Heart left ventricle (tissue), 16 donors: ENCODE measurements at regions of chr3 and their contacts with region 1.

Region 1: GRCh38 chr3:82133070-82133606 is 371.7 kb upstream of the GBE1 start:
- DNase-seq: peak; percentile 46 to 60 (median 57)
- ATAC-seq: peak in 3 of 4 donors; percentile 81 to 82 (median 82)
- H3K4me3 ChIP-seq: no peak overlapping the region
- H3K27ac ChIP-seq: no peak overlapping the region
- H3K4me1 ChIP-seq: no peaks in the 10 kb centered on the region
- H3K27me3 ChIP-seq: no peaks in the 10 kb centered on the region
- CTCF ChIP-seq: peak; percentile 77 to 92 (median 84)
- POLR2A ChIP-seq: no peak

Region 2: DNA sequence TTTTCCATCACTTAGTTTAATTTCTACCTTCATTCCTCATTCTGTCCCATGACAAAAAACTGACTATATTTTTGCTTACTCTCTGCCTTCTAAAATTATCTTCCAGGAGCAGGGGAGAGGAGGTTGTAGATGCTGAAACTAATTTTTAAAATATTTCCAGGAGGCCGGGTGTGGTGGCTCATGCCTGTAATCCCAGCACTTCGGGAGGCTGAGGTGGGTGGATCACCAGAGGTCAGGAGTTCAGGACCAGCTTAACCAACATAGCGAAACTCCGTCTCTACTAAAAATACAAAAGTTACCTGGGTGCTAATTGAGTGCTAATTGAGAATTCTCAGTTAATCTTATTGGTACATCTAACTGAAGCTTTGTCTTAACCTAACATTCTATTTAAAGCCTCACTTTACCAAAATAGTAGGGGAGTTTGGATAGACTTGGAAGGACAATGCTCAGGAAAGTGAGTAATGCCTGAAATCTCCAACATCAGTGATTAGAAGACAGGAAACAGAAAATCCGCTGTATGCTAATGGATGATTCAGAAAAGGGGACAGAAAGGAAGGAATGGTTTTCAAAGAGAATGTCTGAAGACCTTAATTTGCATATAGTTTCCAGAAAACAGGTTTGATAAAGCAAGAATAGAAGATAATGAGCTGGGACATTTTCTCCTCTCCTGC is 707.8 kb before region 1 on chr3:
- intact Hi-C with region 1: loop called in 3 of 10 experiments (anchors 10 kb)
- DNase-seq: no peak
- ATAC-seq: no peak
- H3K4me3 ChIP-seq: no peak overlapping the region
- H3K27ac ChIP-seq: no peak overlapping the region
- H3K4me1 ChIP-seq: no peaks in the 10 kb centered on the region
- H3K27me3 ChIP-seq: no peaks in the 10 kb centered on the region
- CTCF ChIP-seq: no peak
- POLR2A ChIP-seq: no peak

Region 3: DNA sequence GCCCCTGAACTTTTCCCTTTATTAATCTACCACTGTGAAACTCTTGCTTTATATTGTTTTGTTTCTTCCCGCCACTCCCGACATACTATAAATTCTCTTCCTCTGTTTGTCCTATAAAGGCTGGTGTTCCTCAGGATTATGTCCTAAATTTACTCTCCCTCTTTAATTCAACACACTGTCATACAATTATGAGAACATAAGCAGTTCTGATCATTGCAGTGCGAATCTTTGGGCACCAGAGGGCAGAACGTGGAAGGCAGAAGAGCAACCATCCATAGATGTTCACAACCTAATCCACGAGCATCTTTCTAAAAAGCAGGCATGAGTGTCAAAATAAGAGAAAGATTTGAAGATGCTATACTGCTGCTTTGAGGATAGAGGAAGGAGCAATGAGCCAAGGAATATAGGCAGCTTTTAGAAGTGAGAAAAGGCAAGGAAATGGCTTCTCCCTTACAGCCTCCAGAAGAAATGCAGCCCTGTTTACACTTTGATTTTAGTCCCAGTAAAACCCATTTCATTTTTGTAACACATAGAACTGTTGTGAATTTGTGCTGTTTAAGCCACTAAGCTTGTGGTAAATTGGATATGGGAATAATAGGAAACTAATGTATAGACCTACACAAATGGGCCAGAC is 551.1 kb before region 1 on chr3:
- intact Hi-C with region 1: loop called in 4 of 10 experiments (anchors 5 to 10 kb)
- DNase-seq: peak in 1 of 5 donors; percentile 19
- ATAC-seq: peak in 3 of 4 donors; percentile 47 to 72 (median 52)
- H3K4me3 ChIP-seq: no peak overlapping the region
- H3K27ac ChIP-seq: no peak overlapping the region
- H3K4me1 ChIP-seq: peaks cover 0 to 11% (median 0%) of the 10 kb centered on the region in 12 donors
- H3K27me3 ChIP-seq: no peaks in the 10 kb centered on the region
- CTCF ChIP-seq: peak; percentile 32 to 69 (median 52)
- POLR2A ChIP-seq: no peak

Region 4: GRCh38 chr3:81760924-81761903 is 371.9 kb before region 1 on chr3 and contains the start of gene GBE1:
- intact Hi-C with region 1: loop called in 2 of 10 experiments (anchors 5 to 10 kb)
- DNase-seq: peak; percentile 93 to 96 (median 95)
- ATAC-seq: peak; percentile 90 to 95 (median 92)
- H3K4me3 ChIP-seq: peak within 1 kb of the TSS; percentile 48 to 79 (median 68)
- H3K27ac ChIP-seq: peak within 1 kb of the TSS; percentile 91 to 100 (median 98)
- H3K4me1 ChIP-seq: peaks cover 0 to 66% (median 41%) of the 10 kb centered on the region in 12 donors
- H3K27me3 ChIP-seq: no peaks in the 10 kb centered on the region
- CTCF ChIP-seq: peak in 10 of 12 donors; percentile 22 to 64 (median 36)
- POLR2A ChIP-seq: peak; percentile 5 to 75
- total RNA-seq, gene GBE1: 54.5 to 197 (median 95.9) TPM

Region 5: DNA sequence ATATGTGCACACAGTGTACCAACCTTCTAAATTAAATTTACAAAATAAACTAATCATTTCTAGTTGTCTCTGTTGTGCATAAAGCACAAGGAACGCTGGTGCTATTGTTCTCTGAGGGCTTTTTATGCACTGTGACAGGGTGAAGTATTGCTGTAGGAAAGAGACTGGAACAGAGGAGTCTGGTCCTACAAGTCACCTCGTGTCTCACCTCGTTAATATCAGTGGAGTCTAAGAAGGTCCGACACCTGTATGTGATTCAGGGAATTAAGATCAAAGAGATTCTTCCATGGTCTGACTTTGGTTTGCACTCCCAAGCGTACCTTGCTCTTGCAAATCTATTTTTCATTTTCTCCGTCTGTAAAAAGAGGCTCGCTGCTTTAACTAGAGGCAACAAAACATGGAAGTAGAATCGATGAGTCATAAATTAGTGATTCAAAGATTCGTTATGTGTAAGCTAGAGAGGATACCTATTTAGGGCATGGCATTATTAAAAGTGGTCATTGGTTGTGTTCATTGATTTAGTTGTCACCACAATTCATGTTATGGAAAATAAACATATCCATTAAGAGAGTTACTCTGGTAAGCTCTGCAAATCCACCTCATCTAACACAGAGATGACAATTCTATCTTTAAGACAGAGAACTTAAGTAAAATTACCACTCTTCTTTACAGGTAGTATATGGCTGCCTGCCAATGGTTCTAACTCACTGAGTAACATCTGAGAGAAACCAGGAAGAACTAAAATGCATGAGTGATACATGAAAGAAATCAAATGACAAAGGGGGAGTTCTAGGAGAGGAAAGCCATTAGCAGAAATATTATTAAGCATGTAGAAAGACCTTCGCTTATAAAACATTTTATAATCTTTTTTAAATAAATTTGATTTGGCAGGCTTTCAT is 152.3 kb before region 1 on chr3:
- intact Hi-C with region 1: loop called in 1 of 10 experiments (anchors 10 kb)
- DNase-seq: no peak
- ATAC-seq: no peak
- H3K4me3 ChIP-seq: no peak overlapping the region
- H3K27ac ChIP-seq: no peak overlapping the region
- H3K4me1 ChIP-seq: no peaks in the 10 kb centered on the region
- H3K27me3 ChIP-seq: no peaks in the 10 kb centered on the region
- CTCF ChIP-seq: no peak
- POLR2A ChIP-seq: no peak